GM13977 (cell line): ENCODE measurements at regions of chr1 and their contacts with region 1.

Region 1: DNA sequence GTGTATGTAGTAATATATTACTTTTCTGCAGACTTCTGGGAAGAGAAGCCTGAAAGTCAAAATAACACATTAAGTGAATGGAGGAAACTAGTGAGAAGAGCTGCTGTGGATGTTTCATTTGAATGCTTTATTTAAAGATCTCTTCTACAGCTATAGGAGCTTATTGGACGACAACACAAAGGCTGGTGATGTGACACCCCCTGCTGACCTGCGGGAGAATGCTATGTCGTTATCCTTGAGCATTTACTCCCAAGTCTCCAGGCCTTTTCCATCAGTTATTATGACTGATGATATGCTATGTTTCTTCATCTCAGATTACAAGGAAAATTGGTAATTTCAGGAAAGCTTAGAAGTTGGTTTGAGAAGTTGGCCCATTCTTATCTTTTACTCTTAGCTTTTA is 22.3 kb upstream of the PLA2G4A start:
- DNase-seq: no peak
- CTCF ChIP-seq: peak; percentile 41

Region 2: DNA sequence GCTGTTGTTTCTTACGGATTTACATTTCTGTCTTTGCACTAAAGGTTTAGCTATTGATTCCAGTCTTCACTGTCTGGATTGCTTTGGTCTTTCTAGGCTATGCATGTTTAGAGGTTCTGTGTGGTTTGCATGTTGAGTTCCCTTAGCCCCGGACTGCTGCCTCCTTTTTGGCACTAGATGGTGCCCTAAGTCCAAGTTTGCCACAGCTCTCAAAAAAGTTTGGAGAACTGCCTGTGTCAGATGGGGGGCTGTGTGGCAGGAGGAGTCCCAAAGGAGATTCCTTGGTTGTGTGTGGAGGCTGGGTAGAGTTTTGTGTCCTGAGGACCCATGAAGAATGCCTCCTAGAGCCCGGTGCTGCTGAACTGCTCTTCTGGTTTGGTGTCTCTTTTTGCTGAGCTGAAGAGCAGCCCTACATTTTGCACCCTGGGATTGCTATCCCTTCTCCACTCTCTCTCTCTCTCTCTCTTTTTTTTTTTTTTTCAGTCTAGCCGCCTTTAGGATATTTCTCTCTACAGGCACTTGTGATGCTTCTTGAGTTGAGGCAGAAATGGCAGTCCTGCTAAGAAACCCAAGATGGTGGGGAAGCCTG is 200.6 kb before region 1 on chr1:
- in situ Hi-C with region 1: loop called (anchors 25 kb)
- DNase-seq: peak; percentile 41
- CTCF ChIP-seq: peak; percentile 77

Region 3: DNA sequence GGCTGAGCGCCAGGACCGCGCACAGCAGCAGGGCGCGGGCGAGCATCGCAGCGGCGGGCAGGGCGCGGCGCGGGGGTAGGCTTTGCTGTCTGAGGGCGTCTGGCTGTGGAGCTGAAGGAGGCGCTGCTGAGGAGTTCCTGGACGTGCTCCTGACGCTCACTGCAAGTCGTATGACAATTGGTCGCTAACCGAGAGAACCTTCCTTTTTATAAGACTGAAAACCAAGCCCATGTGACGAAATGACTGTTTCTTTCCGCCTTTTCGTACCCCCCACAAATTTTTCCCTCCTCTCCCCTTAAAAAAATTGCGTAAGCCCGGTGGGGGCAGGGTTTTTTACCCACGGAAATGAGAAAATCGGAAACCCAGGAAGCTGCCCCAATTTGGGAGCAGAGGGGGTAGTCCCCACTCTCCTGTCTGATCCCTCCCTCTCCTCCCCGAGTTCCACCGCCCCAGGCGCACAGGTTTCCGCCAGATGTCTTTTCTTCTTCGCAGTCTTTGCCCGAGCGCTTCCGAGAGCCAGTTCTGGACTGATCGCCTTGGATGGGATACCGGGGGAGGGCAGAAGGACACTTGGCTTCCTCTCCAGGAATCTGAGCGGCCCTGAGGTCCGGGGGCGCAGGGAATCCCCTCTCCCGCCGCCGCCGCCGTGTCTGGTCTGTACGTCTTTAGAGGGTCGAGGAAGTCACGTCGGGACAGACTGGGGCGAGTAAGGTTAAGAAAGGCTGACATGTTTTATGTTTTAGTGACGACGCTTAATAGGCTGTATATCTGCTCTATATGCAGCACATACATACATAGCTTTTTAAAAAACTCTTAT is 126.0 kb before region 1 on chr1 and contains the start of gene PTGS2:
- in situ Hi-C with region 1: no loop called
- DNase-seq: peak; percentile 87
- CTCF ChIP-seq: peak; percentile 56